ENCODE measurements at regions of chr13 and their contacts with region 1.

Region 1: DNA sequence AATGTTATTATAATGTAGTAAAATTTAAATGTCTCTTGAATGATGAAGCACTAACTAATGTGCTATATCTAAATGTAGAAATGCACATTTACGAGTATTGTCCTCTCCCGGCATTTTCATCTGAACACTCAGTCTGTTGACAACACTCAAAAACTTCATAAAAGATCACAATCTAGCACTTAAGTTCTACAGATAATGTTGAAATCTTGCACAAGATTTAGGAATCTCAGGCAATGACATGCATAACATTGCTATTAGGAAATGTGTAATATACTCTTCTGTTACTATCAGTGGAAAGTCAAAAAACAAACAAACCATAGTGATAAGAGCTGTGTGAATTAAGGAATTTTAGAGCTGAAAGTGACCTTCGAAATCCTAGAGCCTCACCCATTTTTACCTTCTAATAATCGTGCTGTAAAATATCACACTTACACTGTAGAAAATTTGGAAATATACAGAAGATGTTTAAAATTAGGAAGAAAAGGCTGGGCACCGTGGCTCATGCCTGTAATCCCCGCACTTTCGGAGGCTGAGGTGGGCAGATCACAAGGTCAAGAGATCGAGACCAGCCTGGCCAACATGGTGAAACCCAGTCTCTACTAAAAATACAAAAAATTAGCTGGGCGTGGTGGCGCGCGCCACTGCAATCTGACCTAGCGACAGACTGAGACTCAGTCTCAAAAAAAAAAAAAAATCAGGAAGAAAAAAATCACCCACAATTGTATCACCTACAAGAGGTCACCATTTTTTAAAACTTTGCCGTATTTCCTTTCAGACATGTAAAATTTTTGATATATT is 37.7 kb upstream of the XPO4 start:
- DNase-seq: no peak
- H3K4me3 ChIP-seq: no peak overlapping the region
- H3K27ac ChIP-seq: no peak overlapping the region
- H3K4me1 ChIP-seq: no peaks in the 10 kb centered on the region
- CTCF ChIP-seq: no peak

Region 2: DNA sequence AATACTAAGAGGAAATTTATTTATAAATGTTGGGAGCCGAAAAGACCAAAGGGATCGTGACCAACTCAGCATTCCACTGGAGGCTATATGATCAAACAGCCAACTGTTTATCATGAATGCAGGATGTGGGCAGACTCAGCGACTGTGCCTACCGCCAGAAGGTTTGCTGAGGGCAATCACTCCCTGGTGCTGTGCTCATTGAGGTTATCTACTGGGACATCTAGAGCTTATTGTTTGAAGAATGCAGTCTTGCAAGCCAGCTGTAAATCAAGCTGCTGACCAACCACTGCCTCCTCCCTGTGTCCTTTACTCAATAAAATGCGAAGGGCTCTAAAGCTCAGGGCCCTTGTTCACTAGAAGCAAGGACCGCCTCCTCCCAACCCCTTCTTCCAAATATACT is 29.2 kb before region 1 on chr13:
- CTCF ChIA-PET with region 1: no interaction called
- POLR2A ChIA-PET with region 1: no interaction called
- intact Hi-C with region 1: no loop called
- DNase-seq: no peak
- H3K4me3 ChIP-seq: no peak overlapping the region
- H3K27ac ChIP-seq: no peak overlapping the region
- H3K4me1 ChIP-seq: no peaks in the 10 kb centered on the region
- CTCF ChIP-seq: no peak

Region 3: DNA sequence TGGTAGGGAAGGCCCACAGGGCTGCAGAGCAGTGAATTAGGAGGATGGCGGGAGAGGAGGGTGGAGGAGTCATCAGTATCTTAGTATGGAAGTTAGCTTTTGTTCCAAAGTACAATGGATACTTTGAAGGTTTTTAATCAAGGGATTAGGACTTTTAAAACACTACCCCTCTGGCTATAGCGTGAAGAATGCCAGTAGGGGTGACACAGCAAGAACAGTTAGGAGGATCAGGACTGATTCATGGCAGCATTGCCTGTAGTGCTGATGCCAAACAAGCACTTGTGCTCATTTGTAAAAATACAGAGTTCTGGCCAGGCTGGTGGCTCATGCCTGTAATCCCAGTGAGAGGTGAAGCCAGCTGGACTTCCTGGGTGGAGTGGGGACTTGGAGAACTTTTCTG is 189.8 kb after region 1 on chr13:
- CTCF ChIA-PET with region 1: no interaction called
- POLR2A ChIA-PET with region 1: interaction called, 3 read pairs
- intact Hi-C with region 1: loop called (anchors 5 kb)
- DNase-seq: no peak
- H3K4me3 ChIP-seq: no peak overlapping the region
- H3K27ac ChIP-seq: no peak overlapping the region
- H3K4me1 ChIP-seq: no peaks in the 10 kb centered on the region
- CTCF ChIP-seq: no peak

Region 4: GRCh38 chr13:21181671-21182070 is 241.4 kb after region 1 on chr13:
- CTCF ChIA-PET with region 1: no interaction called
- POLR2A ChIA-PET with region 1: no interaction called
- intact Hi-C with region 1: loop called (anchors 2 kb)
- DNase-seq: no peak
- H3K4me3 ChIP-seq: no peak overlapping the region
- H3K27ac ChIP-seq: no peak overlapping the region
- H3K4me1 ChIP-seq: peaks cover 13% of the 10 kb centered on the region
- CTCF ChIP-seq: no peak

Region 5: DNA sequence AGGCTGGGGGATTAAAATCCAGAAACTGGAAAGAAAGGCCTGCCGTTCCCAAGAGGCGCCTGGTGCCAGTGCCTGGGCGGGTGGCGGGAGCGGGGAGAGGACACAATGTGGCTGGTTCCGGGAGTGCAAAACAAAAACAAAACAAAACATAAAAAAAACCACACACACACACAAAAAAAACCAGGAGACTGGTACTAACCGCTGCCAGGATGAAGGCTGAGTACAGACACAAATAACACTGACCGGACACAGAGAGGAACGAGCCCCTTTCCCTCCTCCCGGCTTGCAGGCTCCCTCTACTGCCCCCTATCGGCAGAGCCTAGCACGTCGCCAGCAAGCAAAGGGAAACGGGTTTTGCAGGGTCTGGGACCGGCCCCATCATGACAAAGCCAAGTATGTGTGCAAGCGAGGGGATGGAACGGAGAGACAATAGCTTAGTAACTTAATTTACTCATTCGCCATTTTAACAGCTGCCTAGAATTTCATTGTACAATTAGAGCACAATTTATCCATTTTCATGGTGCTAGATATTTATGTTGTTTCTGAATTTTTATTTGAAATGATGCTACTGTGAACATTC is 536.7 kb after region 1 on chr13:
- CTCF ChIA-PET with region 1: interaction called, 3 read pairs
- POLR2A ChIA-PET with region 1: no interaction called
- intact Hi-C with region 1: loop called (anchors 2 kb)
- DNase-seq: peak; percentile 81
- H3K4me3 ChIP-seq: peak overlapping the region; percentile 55
- H3K27ac ChIP-seq: no peak overlapping the region
- H3K4me1 ChIP-seq: no peaks in the 10 kb centered on the region
- CTCF ChIP-seq: peak; percentile 95